ENCODE measurements at regions of chr1 and their contacts with region 1.

Region 1: GRCh38 chr1:248837794-248838356 is at the start of gene ZNF672:
- DNase-seq: peak; percentile 99 to 100
- H3K4me3 ChIP-seq: peak within 1 kb of the TSS; percentile 92 to 95
- H3K27ac ChIP-seq: peak within 1 kb of the TSS; percentile 100
- H3K4me1 ChIP-seq: peaks cover 0 to 45% (median 27%) of the 10 kb centered on the region in 4 donors
- H3K27me3 ChIP-seq: peaks cover 0 to 2% of the 10 kb centered on the region in 2 donors
- CTCF ChIP-seq: peak in 1 of 2 experiments; percentile 20

Region 2: GRCh38 chr1:248858891-248859889 is 21.3 kb after region 1 on chr1 and contains the start of gene ZNF692:
- intact Hi-C with region 1: loop called (anchors 2 kb)
- DNase-seq: peak; percentile 98
- H3K4me3 ChIP-seq: peak within 1 kb of the TSS; percentile 55 to 58
- H3K27ac ChIP-seq: peak within 1 kb of the TSS; percentile 88 to 96
- H3K4me1 ChIP-seq: peaks cover 0 to 39% (median 28%) of the 10 kb centered on the region in 4 donors
- H3K27me3 ChIP-seq: no peaks in the 10 kb centered on the region
- CTCF ChIP-seq: no peak

Region 3: GRCh38 chr1:248906009-248906752 is 68.3 kb after region 1 on chr1 and contains the start of gene PGBD2:
- intact Hi-C with region 1: no loop called
- DNase-seq: peak; percentile 93 to 94
- H3K4me3 ChIP-seq: peak within 1 kb of the TSS; percentile 56 to 79
- H3K27ac ChIP-seq: peak within 1 kb of the TSS; percentile 78 to 90
- H3K4me1 ChIP-seq: peaks cover 0 to 13% (median 5%) of the 10 kb centered on the region in 4 donors
- H3K27me3 ChIP-seq: no peaks in the 10 kb centered on the region
- CTCF ChIP-seq: peak; percentile 31 to 57